AG04449 (cell line): ENCODE measurements at regions of chr3 and their contacts with region 1.

Region 1: DNA sequence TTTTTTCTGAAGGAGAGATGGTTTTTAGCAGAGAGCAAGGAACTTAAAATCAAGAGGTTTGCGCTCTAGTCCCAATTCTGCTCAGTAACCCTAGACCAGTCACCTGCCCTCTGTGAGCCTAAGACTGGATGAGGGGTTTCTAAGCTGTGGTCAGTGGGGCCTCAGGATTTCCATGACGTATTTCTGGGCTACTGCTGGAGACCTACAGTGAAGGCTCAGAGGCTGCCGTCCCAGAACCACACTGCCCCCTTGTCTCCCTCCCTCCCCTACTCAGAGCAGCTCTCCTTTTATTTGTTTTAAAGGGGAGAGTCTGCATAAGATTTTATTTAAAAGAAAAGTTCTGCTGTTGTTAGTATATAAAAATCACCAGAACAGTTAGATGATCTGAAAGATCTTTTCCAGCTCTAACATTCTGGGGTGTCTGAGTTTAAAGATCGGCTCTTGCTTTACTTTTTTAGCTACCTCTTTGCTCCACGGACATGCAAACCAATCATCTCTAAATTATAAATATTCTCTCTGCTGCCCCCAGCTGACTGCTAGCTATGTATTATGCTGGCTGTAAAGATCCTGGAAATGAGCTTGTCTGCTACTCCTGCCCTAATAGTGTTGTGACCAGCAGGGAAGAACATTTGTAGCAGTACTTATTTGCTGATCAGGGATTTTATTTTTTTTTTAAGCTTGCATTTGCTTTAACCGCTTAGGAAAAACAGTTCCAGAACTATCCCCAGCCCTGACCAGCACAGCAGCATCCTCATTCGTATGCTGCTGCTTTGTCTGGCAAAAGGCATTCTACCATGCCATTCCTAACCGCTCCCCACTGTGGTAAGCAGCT is 28.6 kb upstream of the NDUFB4 start:
- DNase-seq: no peak
- H3K4me3 ChIP-seq: no peak overlapping the region
- CTCF ChIP-seq: peak; percentile 42

Region 2: GRCh38 chr3:120596116-120596852 is 28.7 kb after region 1 on chr3 and contains the start of gene NDUFB4:
- CTCF ChIA-PET with region 1: interaction called, 20 read pairs
- POLR2A ChIA-PET with region 1: no interaction called
- DNase-seq: peak; percentile 93
- H3K4me3 ChIP-seq: peak within 1 kb of the TSS; percentile 84
- CTCF ChIP-seq: no peak

Region 3: GRCh38 chr3:120801484-120801883 is 233.9 kb after region 1 on chr3:
- CTCF ChIA-PET with region 1: interaction called, 11 read pairs
- POLR2A ChIA-PET with region 1: no interaction called
- DNase-seq: no peak
- H3K4me3 ChIP-seq: no peak overlapping the region
- CTCF ChIP-seq: no peak